GM12878 (cell line): ENCODE measurements at regions of chr11 and their contacts with region 1.

Region 1: DNA sequence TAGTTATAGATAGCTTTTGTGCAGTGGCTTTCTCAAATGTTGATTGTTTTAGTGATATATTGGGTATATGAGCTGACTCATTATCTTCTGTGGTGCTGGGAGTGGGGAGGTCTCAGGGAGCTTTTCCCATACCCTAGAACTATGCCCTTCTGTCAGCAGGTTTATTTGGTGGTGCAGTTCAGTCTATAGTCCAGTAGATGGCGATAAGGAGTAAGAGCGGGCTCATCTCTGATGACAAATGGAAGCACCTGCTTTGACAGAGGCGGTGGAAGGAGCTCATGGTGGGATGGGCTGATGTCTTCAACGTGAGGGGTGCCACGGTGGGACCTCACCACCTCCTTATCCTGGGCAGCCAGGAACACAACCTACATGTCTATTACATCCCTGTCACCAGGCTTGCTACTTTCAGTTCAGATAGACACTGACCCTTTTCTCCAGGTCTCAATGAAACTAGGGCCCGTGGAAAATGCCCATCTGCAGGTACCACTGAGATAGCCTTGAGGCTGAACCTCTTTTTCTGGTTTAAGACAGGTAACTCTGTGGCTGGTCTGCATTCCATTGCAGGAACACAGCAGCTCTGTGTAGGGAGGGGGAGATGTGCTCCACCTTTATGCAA is 13.0 kb upstream of the OR6A2 start:
- DNase-seq: peak; percentile 11
- ATAC-seq: peak; percentile 97
- H3K4me3 ChIP-seq: no peak overlapping the region
- H3K27ac ChIP-seq: no peak overlapping the region
- H3K4me1 ChIP-seq: no peaks in the 10 kb centered on the region
- H3K27me3 ChIP-seq: no peaks in the 10 kb centered on the region
- CTCF ChIP-seq: peak; percentile 70 to 98 (median 87)
- EP300 ChIP-seq: no peak
- POLR2A ChIP-seq: no peak
- RAD21 ChIP-seq: peak; percentile 76

Region 2: GRCh38 chr11:6790546-6790945 is 22.0 kb before region 1 on chr11:
- CTCF ChIA-PET with region 1: interaction called, 10 read pairs
- POLR2A ChIA-PET with region 1: no interaction called
- RAD21 ChIA-PET with region 1: no interaction called
- SMC1A ChIA-PET with region 1: interaction called, 3 read pairs
- in situ Hi-C with region 1: no loop called
- intact Hi-C with region 1: no loop called
- DNase-seq: no peak
- ATAC-seq: no peak
- H3K4me3 ChIP-seq: no peak overlapping the region
- H3K27ac ChIP-seq: no peak overlapping the region
- H3K4me1 ChIP-seq: no peaks in the 10 kb centered on the region
- H3K27me3 ChIP-seq: no peaks in the 10 kb centered on the region
- CTCF ChIP-seq: no peak
- EP300 ChIP-seq: no peak
- POLR2A ChIP-seq: no peak
- RAD21 ChIP-seq: no peak

Region 3: DNA sequence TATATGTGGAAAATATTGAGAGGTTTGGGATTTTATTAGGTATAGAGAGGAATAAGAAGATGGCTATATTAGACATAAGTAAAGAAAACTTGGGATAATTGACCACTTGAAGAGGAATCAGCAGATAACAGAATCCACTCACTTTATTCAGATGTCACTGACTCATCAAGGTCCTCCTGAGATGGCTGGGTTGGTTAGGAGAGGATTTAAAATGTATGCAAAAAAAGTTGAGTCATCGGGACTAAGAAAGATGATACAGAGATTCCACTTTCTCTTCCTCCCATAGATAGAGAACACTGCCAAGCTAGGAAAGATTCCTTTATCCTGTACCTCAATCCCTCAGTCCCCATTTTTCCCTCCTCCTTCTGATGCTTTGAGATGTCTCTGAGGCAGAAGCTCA is 13.1 kb before region 1 on chr11 and contains the start of gene OR6A2:
- CTCF ChIA-PET with region 1: interaction called, 25 read pairs
- POLR2A ChIA-PET with region 1: no interaction called
- RAD21 ChIA-PET with region 1: no interaction called
- SMC1A ChIA-PET with region 1: interaction called, 3 read pairs
- in situ Hi-C with region 1: no loop called
- intact Hi-C with region 1: no loop called
- DNase-seq: no peak
- ATAC-seq: no peak
- H3K4me3 ChIP-seq: no peak within 1 kb of the TSS
- H3K27ac ChIP-seq: no peak within 1 kb of the TSS
- H3K4me1 ChIP-seq: no peaks in the 10 kb centered on the region
- H3K27me3 ChIP-seq: no peaks in the 10 kb centered on the region
- CTCF ChIP-seq: no peak
- EP300 ChIP-seq: no peak
- POLR2A ChIP-seq: no peak
- RAD21 ChIP-seq: no peak
- polyA plus RNA-seq, gene OR6A2: not detected

Region 4: DNA sequence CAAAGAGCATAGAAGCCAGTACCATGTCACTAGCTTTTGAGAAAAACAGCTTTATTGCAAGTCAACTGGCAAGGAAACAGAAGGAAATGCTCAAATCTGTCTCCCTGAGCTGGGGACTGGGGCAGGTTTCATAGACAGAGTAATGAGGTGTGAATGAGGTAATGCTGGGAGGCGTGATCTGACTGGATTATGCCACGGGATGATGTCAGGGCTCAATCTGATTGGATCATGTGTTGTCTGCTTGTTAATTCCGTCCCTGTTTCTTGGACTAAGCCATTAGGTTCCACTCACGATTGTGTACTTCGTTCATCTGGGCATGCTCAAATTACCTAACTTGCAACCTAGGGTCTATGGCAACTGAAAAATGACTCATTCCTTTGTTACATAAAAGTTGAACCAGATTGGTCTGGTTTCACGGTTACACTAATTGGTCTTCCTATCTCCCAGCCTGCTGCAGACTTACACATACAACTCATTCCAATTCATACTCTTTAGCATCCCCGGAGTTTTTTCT is 12.8 kb after region 1 on chr11:
- CTCF ChIA-PET with region 1: interaction called, 24 read pairs
- POLR2A ChIA-PET with region 1: no interaction called
- RAD21 ChIA-PET with region 1: no interaction called
- SMC1A ChIA-PET with region 1: no interaction called
- in situ Hi-C with region 1: no loop called
- intact Hi-C with region 1: no loop called
- DNase-seq: no peak
- ATAC-seq: peak; percentile 84
- H3K4me3 ChIP-seq: no peak overlapping the region
- H3K27ac ChIP-seq: no peak overlapping the region
- H3K4me1 ChIP-seq: no peaks in the 10 kb centered on the region
- H3K27me3 ChIP-seq: no peaks in the 10 kb centered on the region
- CTCF ChIP-seq: no peak
- EP300 ChIP-seq: no peak
- POLR2A ChIP-seq: no peak
- RAD21 ChIP-seq: no peak

Region 5: GRCh38 chr11:7278314-7278917 is 465.9 kb after region 1 on chr11:
- CTCF ChIA-PET with region 1: interaction called, 11 read pairs
- POLR2A ChIA-PET with region 1: no interaction called
- RAD21 ChIA-PET with region 1: interaction called, 7 read pairs
- SMC1A ChIA-PET with region 1: no interaction called
- in situ Hi-C with region 1: no loop called
- intact Hi-C with region 1: loop called (anchors 2 kb)
- DNase-seq: no peak
- ATAC-seq: peak; percentile 90
- H3K4me3 ChIP-seq: no peak overlapping the region
- H3K27ac ChIP-seq: no peak overlapping the region
- H3K4me1 ChIP-seq: no peaks in the 10 kb centered on the region
- H3K27me3 ChIP-seq: no peaks in the 10 kb centered on the region
- CTCF ChIP-seq: peak; percentile 44 to 60 (median 49)
- EP300 ChIP-seq: no peak
- POLR2A ChIP-seq: no peak
- RAD21 ChIP-seq: peak; percentile 35; the same call in 1 of the 2 replicates

Region 6: GRCh38 chr11:7442588-7443215 is 630.2 kb after region 1 on chr11:
- CTCF ChIA-PET with region 1: no interaction called
- POLR2A ChIA-PET with region 1: no interaction called
- RAD21 ChIA-PET with region 1: no interaction called
- SMC1A ChIA-PET with region 1: no interaction called
- in situ Hi-C with region 1: no loop called
- intact Hi-C with region 1: loop called (anchors 5 kb)
- DNase-seq: peak; percentile 30
- ATAC-seq: peak; percentile 98
- H3K4me3 ChIP-seq: no peak overlapping the region
- H3K27ac ChIP-seq: no peak overlapping the region
- H3K4me1 ChIP-seq: no peaks in the 10 kb centered on the region
- H3K27me3 ChIP-seq: no peaks in the 10 kb centered on the region
- CTCF ChIP-seq: peak; percentile 86 to 92 (median 90)
- EP300 ChIP-seq: no peak
- POLR2A ChIP-seq: no peak
- RAD21 ChIP-seq: peak; percentile 98

Region 7: DNA sequence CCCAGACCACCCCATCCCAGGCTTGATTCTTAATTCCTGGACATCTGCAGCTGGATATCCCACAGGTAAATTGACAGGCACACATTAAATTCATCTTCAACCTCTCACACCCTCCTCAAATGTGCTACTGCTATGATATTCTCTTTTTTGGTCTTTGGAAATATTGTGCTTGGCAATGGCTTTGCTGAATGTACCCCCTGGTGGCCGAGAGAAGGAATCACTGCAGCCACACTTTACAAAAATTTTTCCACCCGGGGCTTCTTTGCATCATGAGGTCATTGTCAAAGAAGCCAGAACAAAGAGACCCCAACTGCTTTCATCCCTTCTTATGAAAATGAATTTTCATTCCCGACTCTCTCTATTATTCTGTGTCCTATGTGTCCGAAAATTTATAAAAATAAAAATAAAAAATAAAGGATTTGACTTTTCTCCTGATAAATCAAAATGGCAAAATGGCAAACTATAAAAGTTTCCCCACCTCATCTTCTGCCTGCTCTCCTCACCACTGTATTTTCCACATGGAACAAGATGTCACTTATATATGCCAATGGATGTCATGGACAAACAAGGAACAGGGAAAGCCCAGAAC is 875.8 kb after region 1 on chr11:
- CTCF ChIA-PET with region 1: interaction called, 7 read pairs
- POLR2A ChIA-PET with region 1: no interaction called
- RAD21 ChIA-PET with region 1: no interaction called
- SMC1A ChIA-PET with region 1: interaction called, 4 read pairs
- in situ Hi-C with region 1: loop called (anchors 10 kb)
- intact Hi-C with region 1: loop called (anchors 5 kb)
- DNase-seq: no peak
- ATAC-seq: peak; percentile 84
- H3K4me3 ChIP-seq: no peak overlapping the region
- H3K27ac ChIP-seq: no peak overlapping the region
- H3K4me1 ChIP-seq: no peaks in the 10 kb centered on the region
- H3K27me3 ChIP-seq: peaks cover 0 to 2% of the 10 kb centered on the region in 2 experiments; a peak in 2 of 4 replicates
- CTCF ChIP-seq: peak; percentile 76 to 80 (median 79)
- EP300 ChIP-seq: no peak
- POLR2A ChIP-seq: no peak
- RAD21 ChIP-seq: peak; percentile 80